Activated T-helper 2 cell treated with anti-CD3 and anti-CD28 coated beads, Interferon-gamma antibody, Interleukin-2, Interleukin-4, amounts not matched to agents 10 μg/mL and 5 μg/mL and 100 μg/mL, durations not matched to agents 14 hours and 24 hours and 36 hours (primary cell): ENCODE measurements at regions of chr13 and their contacts with region 1.

Region 1: DNA sequence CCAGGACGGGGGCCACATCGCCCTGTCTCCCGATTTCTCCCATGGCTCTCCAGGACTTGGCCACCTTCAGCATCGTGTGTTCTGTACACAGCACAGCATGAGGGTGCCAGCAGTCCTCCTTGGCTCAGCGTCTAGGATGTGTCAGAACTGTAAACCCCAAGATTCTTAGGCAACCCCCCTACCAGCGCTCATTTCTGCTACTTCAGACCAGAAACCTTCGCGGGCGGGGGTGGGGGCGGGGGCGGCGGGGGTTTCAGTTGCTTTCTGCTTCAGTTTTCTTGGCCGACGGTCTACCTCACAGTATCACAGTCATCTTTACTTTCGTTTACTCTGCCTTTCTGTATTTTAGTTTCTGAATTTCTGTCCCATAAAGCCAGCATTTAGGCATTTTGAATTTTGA is 82.4 kb downstream of the GGACT start:
- DNase-seq: no peak
- H3K4me3 Mint-ChIP-seq: peak overlapping the region; percentile 65
- H3K27ac Mint-ChIP-seq: peak overlapping the region; percentile 81
- H3K4me1 Mint-ChIP-seq: peaks cover 20% of the 10 kb centered on the region
- H3K27me3 Mint-ChIP-seq: peaks cover 44% of the 10 kb centered on the region

Region 2: DNA sequence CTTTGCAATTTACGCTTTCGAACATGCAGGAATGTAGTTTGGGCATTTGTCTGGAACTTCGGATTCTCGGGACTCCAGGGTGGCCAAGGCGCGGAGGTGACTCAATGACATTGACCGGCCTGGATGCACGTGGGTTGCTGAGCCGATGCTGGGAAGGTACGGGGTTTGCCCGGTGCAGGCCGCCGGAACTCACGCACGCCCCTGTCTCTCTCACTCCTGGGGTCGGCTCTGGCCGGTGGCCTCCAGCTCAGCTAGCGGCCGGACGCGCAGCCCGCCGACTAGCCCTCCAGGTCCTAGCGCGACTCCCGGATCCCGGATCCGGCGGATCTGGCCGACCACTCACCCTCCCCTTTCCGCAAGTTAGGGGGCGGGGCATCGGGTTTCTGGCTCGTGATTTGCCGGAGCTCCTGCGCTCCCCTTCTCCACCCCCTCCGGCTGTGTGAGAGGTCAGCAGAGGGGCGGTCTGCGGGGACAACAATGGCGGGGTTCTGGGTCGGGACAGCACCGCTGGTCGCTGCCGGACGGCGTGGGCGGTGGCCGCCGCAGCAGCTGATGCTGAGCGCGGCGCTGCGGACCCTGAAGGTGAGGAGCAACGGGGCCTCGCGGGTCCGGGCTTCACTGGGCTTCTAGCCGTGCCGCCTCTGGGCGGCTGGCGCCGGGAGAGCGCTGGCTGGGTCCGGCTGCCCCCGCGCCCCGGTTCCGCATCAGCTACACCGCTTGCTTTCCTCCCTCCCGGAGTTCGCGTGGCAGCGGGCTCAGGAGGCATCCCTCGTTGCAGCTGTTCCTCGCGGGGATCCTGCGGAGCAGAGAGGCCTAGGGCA is 417.3 kb before region 1 on chr13 and contains the start of gene PCCA:
- intact Hi-C with region 1: loop called (anchors 1 kb)
- DNase-seq: peak; percentile 69
- H3K4me3 Mint-ChIP-seq: peak within 1 kb of the TSS; percentile 91
- H3K27ac Mint-ChIP-seq: peak within 1 kb of the TSS; percentile 68
- H3K4me1 Mint-ChIP-seq: peaks cover 16% of the 10 kb centered on the region
- H3K27me3 Mint-ChIP-seq: no peaks in the 10 kb centered on the region
- total RNA-seq, gene PCCA: 6.7 and 7.1 TPM in 2 replicates

Region 3: DNA sequence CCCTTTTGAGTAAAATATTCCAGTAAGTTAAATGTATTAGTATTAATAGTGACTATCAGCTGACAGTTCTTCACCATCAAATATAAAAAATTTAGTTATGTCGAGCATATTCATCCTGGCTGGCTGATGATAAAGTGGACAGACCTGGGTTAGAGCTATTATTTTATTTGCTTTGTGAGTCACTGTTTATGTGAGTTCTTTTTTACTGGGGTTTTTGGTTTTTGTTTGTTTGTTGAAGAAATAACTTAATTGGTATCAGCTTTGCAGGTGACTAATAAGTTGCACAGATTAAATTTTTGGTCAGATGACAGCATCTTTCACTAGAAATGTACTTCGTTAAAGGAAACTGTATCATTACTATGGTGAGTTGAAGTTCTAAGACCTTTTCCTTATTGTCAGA is 142.3 kb before region 1 on chr13:
- intact Hi-C with region 1: loop called (anchors 1 kb)
- DNase-seq: no peak
- H3K4me3 Mint-ChIP-seq: no peak overlapping the region
- H3K27ac Mint-ChIP-seq: no peak overlapping the region
- H3K4me1 Mint-ChIP-seq: peaks cover 14% of the 10 kb centered on the region
- H3K27me3 Mint-ChIP-seq: no peaks in the 10 kb centered on the region

Region 4: GRCh38 chr13:100434010-100434763 is 72.0 kb before region 1 on chr13:
- intact Hi-C with region 1: loop called (anchors 2 kb)
- DNase-seq: no peak
- H3K4me3 Mint-ChIP-seq: no peak overlapping the region
- H3K27ac Mint-ChIP-seq: peak overlapping the region; percentile 35
- H3K4me1 Mint-ChIP-seq: peaks cover 36% of the 10 kb centered on the region
- H3K27me3 Mint-ChIP-seq: no peaks in the 10 kb centered on the region

Region 5: GRCh38 chr13:100674848-100675660 is 168.9 kb after region 1 on chr13:
- intact Hi-C with region 1: no loop called
- DNase-seq: peak; percentile 99
- H3K4me3 Mint-ChIP-seq: peak overlapping the region; percentile 82
- H3K27ac Mint-ChIP-seq: peak overlapping the region; percentile 48
- H3K4me1 Mint-ChIP-seq: peaks cover 18% of the 10 kb centered on the region
- H3K27me3 Mint-ChIP-seq: peaks cover 23% of the 10 kb centered on the region